B cell (primary cell): ENCODE measurements at regions of chr9 and their contacts with region 1.

Region 1: DNA sequence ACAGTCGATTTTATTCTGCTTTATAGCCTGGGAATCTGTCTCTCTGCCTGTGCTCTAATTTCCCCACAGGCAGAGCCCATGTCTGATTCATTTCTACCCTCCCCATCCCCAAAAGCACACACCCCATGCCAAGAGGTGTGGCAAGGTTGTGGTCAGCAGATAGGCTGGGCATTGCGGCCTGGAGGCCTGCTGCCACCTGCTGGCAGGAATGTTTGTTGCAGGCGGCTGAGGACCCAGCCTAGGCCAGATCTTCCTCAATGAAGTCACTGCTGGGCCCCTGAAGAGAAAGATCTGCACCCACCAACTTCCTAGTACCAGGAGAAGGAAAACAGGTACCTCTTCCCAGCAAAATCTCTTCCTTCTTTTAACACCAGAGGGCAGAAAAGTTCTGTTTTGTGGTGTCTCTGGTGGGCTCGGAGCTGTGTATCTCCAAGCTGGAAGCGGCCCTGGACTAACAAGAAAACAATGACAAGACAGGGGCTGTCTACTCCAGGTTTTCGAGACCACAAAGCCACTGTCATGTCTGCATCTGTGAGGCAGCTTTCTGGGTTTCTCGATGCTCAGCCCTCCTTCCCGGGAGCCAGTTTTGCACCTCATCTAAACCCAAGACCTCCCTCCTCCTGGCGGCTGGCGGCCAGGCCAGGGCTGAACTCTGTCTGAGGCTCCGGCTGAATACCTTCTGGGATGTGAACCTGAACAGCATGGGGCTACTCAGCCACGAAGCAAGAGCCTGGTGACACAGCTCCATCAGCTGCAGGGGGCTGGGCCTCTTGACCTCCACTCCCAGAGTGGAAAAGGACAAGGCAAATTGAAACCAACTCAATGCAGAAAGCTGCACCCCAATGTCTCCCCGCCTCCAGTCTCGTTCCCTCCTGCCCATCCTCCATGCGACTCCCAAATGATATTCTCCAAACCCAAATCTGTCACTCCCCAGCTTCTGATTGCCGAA is 4.9 kb downstream of the ANKS6 start:
- DNase-seq: peak; percentile 69
- ATAC-seq: peak; percentile 71
- H3K4me3 ChIP-seq: no peak overlapping the region
- H3K4me3 Mint-ChIP-seq: no peak overlapping the region
- H3K27ac ChIP-seq: no peak overlapping the region
- H3K27ac Mint-ChIP-seq: no peak overlapping the region
- H3K4me1 ChIP-seq: peaks cover 4 to 7% of the 10 kb centered on the region in 2 donors
- H3K4me1 Mint-ChIP-seq: peaks cover 24% of the 10 kb centered on the region
- H3K27me3 ChIP-seq: no peaks in the 10 kb centered on the region
- H3K27me3 Mint-ChIP-seq: no peaks in the 10 kb centered on the region
- CTCF ChIP-seq: peak; percentile 95

Region 2: GRCh38 chr9:98755006-98755575 is 36.3 kb before region 1 on chr9:
- CTCF ChIA-PET with region 1: no interaction called
- POLR2A ChIA-PET with region 1: no interaction called
- intact Hi-C with region 1: no loop called
- DNase-seq: no peak
- ATAC-seq: no peak
- H3K4me3 ChIP-seq: no peak overlapping the region
- H3K4me3 Mint-ChIP-seq: no peak overlapping the region
- H3K27ac ChIP-seq: no peak overlapping the region
- H3K27ac Mint-ChIP-seq: no peak overlapping the region
- H3K4me1 ChIP-seq: no peaks in the 10 kb centered on the region
- H3K4me1 Mint-ChIP-seq: no peaks in the 10 kb centered on the region
- H3K27me3 ChIP-seq: no peaks in the 10 kb centered on the region
- H3K27me3 Mint-ChIP-seq: no peaks in the 10 kb centered on the region
- CTCF ChIP-seq: no peak

Region 3: DNA sequence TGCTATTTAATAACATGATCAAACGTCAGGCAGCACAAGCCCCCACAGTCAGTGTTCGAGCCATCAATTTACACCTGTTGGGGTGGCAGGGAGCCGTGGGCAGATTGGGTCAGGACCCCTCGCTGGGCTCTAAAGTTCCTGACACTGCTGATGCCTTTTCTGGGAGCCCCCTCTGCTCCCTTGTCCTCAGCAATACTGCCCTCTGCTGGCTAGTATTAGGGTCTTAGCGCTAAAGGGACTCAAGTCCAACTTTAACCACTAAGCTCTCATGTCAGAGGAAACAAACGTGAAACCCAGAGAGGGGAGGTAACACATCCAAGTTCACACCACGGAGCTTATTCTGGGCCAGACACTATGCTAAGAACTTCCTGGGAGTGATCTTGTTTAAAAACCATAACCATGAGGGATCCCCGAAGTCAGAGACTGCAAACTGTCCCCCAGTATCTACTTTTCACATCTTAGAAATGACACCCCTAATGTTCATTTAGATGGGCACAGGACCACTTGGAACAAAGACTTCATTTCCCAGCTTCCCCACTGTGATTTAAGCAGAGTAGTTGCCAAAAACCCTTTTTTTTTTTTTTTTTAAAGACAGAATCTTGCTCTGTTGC is 15.5 kb before region 1 on chr9:
- CTCF ChIA-PET with region 1: interaction called, 46 read pairs
- POLR2A ChIA-PET with region 1: no interaction called
- intact Hi-C with region 1: no loop called
- DNase-seq: peak; percentile 69
- ATAC-seq: peak; percentile 64
- H3K4me3 ChIP-seq: no peak overlapping the region
- H3K4me3 Mint-ChIP-seq: no peak overlapping the region
- H3K27ac ChIP-seq: no peak overlapping the region
- H3K27ac Mint-ChIP-seq: no peak overlapping the region
- H3K4me1 ChIP-seq: no peaks in the 10 kb centered on the region
- H3K4me1 Mint-ChIP-seq: no peaks in the 10 kb centered on the region
- H3K27me3 ChIP-seq: no peaks in the 10 kb centered on the region
- H3K27me3 Mint-ChIP-seq: no peaks in the 10 kb centered on the region
- CTCF ChIP-seq: peak; percentile 76